OCI-LY7 (cell line): ENCODE measurements at regions of chr22 and their contacts with region 1.

Region 1: GRCh38 chr22:31089160-31090100 is 8.3 kb downstream of the SMTN start:
- DNase-seq: peak; percentile 64
- H3K4me3 ChIP-seq: no peak overlapping the region
- H3K27ac ChIP-seq: no peak overlapping the region
- H3K4me1 ChIP-seq: peaks cover 19% of the 10 kb centered on the region
- CTCF ChIP-seq: peak; percentile 89

Region 2: GRCh38 chr22:31107178-31107893 is 17.9 kb after region 1 on chr22 and contains the start of gene SELENOM:
- CTCF ChIA-PET with region 1: no interaction called
- POLR2A ChIA-PET with region 1: no interaction called
- intact Hi-C with region 1: no loop called
- DNase-seq: peak; percentile 84
- H3K4me3 ChIP-seq: peak within 1 kb of the TSS; percentile 64
- H3K27ac ChIP-seq: no peak within 1 kb of the TSS
- H3K4me1 ChIP-seq: peaks cover 5% of the 10 kb centered on the region
- CTCF ChIP-seq: peak; percentile 85
- total RNA-seq, gene SELENOM: 1.4 TPM in 1 of 2 replicates, not detected in the other

Region 3: DNA sequence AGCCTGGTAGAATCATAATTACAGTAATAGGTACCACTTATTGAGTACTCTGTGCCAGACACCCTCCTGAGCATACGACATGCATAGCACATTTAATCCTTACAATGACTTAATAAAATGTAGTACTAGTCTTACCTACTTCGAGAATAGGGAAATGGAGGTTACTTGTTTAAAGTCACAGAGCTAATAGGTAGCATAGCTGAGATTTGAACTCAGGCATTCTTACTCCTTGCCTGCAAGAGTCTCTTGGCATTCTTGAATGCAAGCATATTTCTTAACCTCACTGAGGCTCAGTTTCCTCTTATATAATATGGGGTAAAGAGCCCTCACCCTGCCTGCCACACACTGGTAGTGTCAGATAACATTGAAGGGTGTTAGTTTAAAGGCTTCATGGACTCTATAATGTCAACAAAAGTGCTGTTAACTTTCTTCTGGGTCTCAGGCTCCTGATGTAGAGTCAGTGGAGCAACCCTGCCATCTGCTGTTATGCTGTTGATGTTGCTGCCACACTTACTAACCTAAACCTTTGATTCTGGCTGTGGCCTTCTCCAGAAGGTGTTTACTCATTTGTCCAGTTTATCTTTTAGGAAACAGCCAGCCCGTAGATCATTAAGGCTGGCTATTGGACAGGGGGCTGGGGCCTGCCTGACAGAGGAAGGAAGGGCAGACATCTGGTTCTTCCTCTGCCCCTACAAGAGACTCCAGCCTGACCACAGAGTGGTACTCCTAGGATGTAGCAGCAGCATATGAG is 141.6 kb after region 1 on chr22:
- CTCF ChIA-PET with region 1: no interaction called
- POLR2A ChIA-PET with region 1: no interaction called
- intact Hi-C with region 1: loop called (anchors 2 kb)
- DNase-seq: peak; percentile 63
- H3K4me3 ChIP-seq: no peak overlapping the region
- H3K27ac ChIP-seq: no peak overlapping the region
- H3K4me1 ChIP-seq: no peaks in the 10 kb centered on the region
- CTCF ChIP-seq: peak; percentile 85

Region 4: GRCh38 chr22:31272522-31273446 is 183.4 kb after region 1 on chr22:
- CTCF ChIA-PET with region 1: no interaction called
- POLR2A ChIA-PET with region 1: no interaction called
- intact Hi-C with region 1: loop called (anchors 2 kb)
- DNase-seq: peak; percentile 66
- H3K4me3 ChIP-seq: no peak overlapping the region
- H3K27ac ChIP-seq: no peak overlapping the region
- H3K4me1 ChIP-seq: no peaks in the 10 kb centered on the region
- CTCF ChIP-seq: peak; percentile 89